Activated CD4-positive, alpha-beta T cell treated with anti-CD3 and anti-CD28 coated beads for 36 hours (primary cell): ENCODE measurements at regions of chr11 and their contacts with region 1.

Region 1: DNA sequence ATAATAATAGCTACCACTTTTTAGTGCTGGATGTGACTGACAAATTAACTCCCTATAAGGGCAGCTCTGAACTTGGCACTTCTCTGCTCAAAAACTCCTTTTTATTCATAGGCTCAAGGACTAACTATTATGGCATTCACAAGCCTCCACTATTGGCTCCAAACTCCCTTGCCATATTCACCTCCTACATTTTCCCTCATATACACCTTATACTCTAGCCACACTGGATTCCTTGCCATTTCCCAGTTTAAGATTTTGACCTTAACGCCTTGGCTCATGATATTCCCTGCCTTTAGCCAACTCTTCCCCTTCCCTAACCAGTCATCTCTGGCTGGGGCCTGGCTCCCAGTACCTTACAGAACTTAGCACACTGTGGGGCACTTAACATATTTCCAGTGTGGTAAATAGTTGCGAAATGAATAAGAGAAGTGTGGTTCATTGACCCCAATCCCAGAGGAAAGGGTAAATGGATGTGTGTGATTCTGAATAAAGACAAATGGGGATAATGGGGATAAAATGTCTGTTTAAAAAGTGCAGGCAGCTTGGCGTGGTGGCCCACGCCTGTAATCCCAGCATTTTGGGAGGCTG is 40.0 kb upstream of the SORL1 start:
- DNase-seq: no peak
- ATAC-seq: no peak
- H3K4me3 Mint-ChIP-seq: no peak overlapping the region
- H3K27ac Mint-ChIP-seq: no peak overlapping the region
- H3K4me1 Mint-ChIP-seq: peaks cover 45% of the 10 kb centered on the region
- H3K27me3 Mint-ChIP-seq: no peaks in the 10 kb centered on the region

Region 2: DNA sequence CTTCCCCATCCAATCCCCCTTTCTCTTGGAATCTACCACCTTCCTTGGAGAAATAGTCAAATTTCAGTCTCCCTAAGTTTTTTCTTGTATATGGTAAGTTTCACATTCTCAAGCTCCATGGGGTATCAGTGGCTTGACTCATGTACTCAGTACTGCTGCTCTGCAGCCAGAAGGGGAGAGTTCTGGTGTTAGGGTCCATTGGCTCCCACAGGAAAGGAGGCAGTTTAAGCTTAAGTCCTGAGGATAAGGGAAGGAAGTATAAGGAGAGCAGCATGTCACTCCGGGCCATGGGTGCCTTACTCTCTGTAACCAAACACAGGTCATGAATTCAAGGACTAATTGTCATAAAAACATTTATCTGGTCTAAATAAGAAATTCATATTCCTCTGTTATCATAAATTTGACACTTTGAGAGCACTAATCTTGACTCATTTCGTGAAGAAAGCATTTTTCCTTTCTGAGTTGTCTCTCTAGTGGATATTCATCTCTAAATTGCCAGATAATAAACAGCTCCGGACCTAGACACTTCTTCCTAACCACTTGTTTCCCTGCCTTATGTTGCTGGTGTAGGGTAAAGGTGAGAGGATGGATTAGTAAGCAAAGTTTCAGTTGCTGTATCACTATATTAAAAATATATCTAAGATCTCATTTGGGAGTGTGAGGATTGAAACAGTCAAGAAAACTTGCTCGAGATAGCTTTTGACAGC is 19.9 kb after region 1 on chr11:
- CTCF ChIA-PET with region 1: interaction called, 5 read pairs
- POLR2A ChIA-PET with region 1: interaction called, 10 read pairs
- intact Hi-C with region 1: loop called (anchors 1 kb)
- DNase-seq: no peak
- ATAC-seq: peak; percentile 94
- H3K4me3 Mint-ChIP-seq: no peak overlapping the region
- H3K27ac Mint-ChIP-seq: peak overlapping the region; percentile 76
- H3K4me1 Mint-ChIP-seq: peaks cover 41% of the 10 kb centered on the region
- H3K27me3 Mint-ChIP-seq: no peaks in the 10 kb centered on the region